ENCODE measurements at regions of chr6 and their contacts with region 1.

Region 1: GRCh38 chr6:41936073-41936837 is 5.4 kb downstream of the CCND3 start:
- DNase-seq: peak; percentile 80 to 87 (median 87)
- H3K4me3 ChIP-seq: peak overlapping the region in 1 of 3 experiments; percentile 97
- H3K4me3 Mint-ChIP-seq: peak overlapping the region; percentile 58 to 84
- H3K27ac ChIP-seq: peak overlapping the region; percentile 47 to 81
- H3K27ac Mint-ChIP-seq: peak overlapping the region; percentile 90 to 99 (median 98)
- H3K4me1 ChIP-seq: peaks cover 59 to 65% of the 10 kb centered on the region in 2 donors
- H3K4me1 Mint-ChIP-seq: peaks cover 63% of the 10 kb centered on the region
- H3K27me3 ChIP-seq: no peaks in the 10 kb centered on the region
- H3K27me3 Mint-ChIP-seq: peaks cover 0 to 2% (median 0%) of the 10 kb centered on the region in 3 donors
- CTCF ChIP-seq: peak; percentile 83

Region 2: DNA sequence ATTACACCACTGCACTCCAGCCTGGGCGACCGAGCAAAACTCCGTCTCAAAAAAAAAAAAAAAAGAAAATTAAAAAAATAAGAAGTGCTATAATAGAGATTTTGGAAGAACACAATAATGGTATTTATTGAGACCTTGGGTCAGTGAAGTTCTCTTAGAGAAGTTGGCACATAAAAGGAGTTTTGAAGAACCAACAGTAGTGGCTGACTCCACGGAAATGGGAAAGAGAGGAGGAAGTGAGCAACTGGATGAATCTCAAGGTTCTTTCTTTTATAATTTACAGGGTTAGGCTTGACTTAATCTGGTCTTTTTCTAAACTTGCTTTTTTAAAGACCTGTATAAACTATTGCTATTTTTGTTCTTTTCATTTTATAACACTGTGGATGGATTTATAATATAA is 95.9 kb before region 1 on chr6:
- intact Hi-C with region 1: loop called in 1 of 2 experiments (anchors 5 kb)
- DNase-seq: no peak
- H3K4me3 ChIP-seq: no peak overlapping the region
- H3K4me3 Mint-ChIP-seq: no peak overlapping the region
- H3K27ac ChIP-seq: no peak overlapping the region
- H3K27ac Mint-ChIP-seq: peak overlapping the region in 2 of 7 donors; percentile 57 to 63
- H3K4me1 ChIP-seq: no peaks in the 10 kb centered on the region
- H3K4me1 Mint-ChIP-seq: peaks cover 3% of the 10 kb centered on the region
- H3K27me3 ChIP-seq: no peaks in the 10 kb centered on the region
- H3K27me3 Mint-ChIP-seq: no peaks in the 10 kb centered on the region
- CTCF ChIP-seq: no peak

Region 3: GRCh38 chr6:42028234-42029061 is 92.2 kb after region 1 on chr6:
- intact Hi-C with region 1: loop called (anchors 5 kb)
- DNase-seq: peak; percentile 67 to 89 (median 82)
- H3K4me3 ChIP-seq: peak overlapping the region; percentile 5 to 68 (median 11)
- H3K4me3 Mint-ChIP-seq: peak overlapping the region; percentile 74 to 88
- H3K27ac ChIP-seq: peak overlapping the region; percentile 81 to 86
- H3K27ac Mint-ChIP-seq: peak overlapping the region; percentile 94 to 98 (median 95)
- H3K4me1 ChIP-seq: peaks cover 86 to 89% of the 10 kb centered on the region in 2 donors
- H3K4me1 Mint-ChIP-seq: peaks cover 88% of the 10 kb centered on the region
- H3K27me3 ChIP-seq: no peaks in the 10 kb centered on the region
- H3K27me3 Mint-ChIP-seq: no peaks in the 10 kb centered on the region
- CTCF ChIP-seq: no peak